Activated CD4-positive, alpha-beta memory T cell treated with anti-CD3 and anti-CD28 coated beads, Interleukin-2, amount 10 ng/mL, durations not matched to agents 7 days and 5 days (primary cell): ENCODE measurements at regions of chr17 and their contacts with region 1.

Region 1: GRCh38 chr17:43927060-43927864 is 15.0 kb downstream of the PPY start:
- DNase-seq: no peak
- H3K4me3 Mint-ChIP-seq: peak overlapping the region; percentile 48
- H3K27ac Mint-ChIP-seq: peak overlapping the region; percentile 63
- H3K4me1 Mint-ChIP-seq: peaks cover 36% of the 10 kb centered on the region
- H3K27me3 Mint-ChIP-seq: no peaks in the 10 kb centered on the region

Region 2: GRCh38 chr17:43832168-43832975 is 94.9 kb before region 1 on chr17:
- CTCF ChIA-PET with region 1: no interaction called
- POLR2A ChIA-PET with region 1: no interaction called
- DNase-seq: no peak
- H3K4me3 Mint-ChIP-seq: peak overlapping the region; percentile 28
- H3K27ac Mint-ChIP-seq: no peak overlapping the region
- H3K4me1 Mint-ChIP-seq: peaks cover 11% of the 10 kb centered on the region
- H3K27me3 Mint-ChIP-seq: peaks cover 48% of the 10 kb centered on the region

Region 3: DNA sequence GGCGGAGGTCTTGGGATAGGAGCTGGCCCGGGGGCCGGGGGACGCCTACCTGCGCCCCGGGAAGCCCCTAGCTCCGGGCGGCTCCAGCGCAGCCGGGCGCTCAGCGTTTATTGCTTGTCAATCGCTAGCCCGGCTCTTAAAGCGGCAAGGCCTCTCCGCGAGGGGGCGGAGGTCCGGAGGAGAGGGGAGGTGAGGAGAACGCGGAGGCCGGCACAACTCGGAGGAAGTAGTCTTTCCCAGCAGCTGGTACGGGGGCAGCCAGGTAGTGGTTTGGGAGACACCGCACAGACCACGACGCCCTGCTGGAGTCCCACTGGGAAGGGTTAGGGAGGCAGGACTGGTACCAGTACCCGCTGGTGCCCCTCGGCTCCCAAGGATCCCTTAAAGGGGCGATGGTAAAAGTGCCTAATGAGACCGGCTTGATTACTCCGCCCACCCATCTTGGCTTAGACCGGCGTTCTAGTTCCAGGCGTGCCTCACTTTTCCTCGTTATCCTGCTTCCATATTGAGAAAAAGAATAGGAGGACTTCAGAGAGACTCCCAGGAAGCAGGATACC is 19.8 kb before region 1 on chr17 and contains the start of gene MPP2:
- CTCF ChIA-PET with region 1: interaction called, 15 read pairs
- POLR2A ChIA-PET with region 1: no interaction called
- DNase-seq: peak; percentile 37
- H3K4me3 Mint-ChIP-seq: no peak within 1 kb of the TSS
- H3K27ac Mint-ChIP-seq: no peak within 1 kb of the TSS
- H3K4me1 Mint-ChIP-seq: peaks cover 9% of the 10 kb centered on the region
- H3K27me3 Mint-ChIP-seq: peaks cover 56% of the 10 kb centered on the region
- total RNA-seq, gene MPP2: 0.48 to 0.65 TPM

Region 4: GRCh38 chr17:44014437-44015172 is 87.3 kb after region 1 on chr17 and contains the start of gene TMEM101:
- CTCF ChIA-PET with region 1: no interaction called
- POLR2A ChIA-PET with region 1: no interaction called
- DNase-seq: peak; percentile 91
- H3K4me3 Mint-ChIP-seq: peak within 1 kb of the TSS; percentile 98
- H3K27ac Mint-ChIP-seq: peak within 1 kb of the TSS; percentile 88
- H3K4me1 Mint-ChIP-seq: peaks cover 27% of the 10 kb centered on the region
- H3K27me3 Mint-ChIP-seq: no peaks in the 10 kb centered on the region
- total RNA-seq, gene TMEM101: 32.2 to 35.5 TPM